ENCODE measurements at regions of chr19 and their contacts with region 1.

Region 1: DNA sequence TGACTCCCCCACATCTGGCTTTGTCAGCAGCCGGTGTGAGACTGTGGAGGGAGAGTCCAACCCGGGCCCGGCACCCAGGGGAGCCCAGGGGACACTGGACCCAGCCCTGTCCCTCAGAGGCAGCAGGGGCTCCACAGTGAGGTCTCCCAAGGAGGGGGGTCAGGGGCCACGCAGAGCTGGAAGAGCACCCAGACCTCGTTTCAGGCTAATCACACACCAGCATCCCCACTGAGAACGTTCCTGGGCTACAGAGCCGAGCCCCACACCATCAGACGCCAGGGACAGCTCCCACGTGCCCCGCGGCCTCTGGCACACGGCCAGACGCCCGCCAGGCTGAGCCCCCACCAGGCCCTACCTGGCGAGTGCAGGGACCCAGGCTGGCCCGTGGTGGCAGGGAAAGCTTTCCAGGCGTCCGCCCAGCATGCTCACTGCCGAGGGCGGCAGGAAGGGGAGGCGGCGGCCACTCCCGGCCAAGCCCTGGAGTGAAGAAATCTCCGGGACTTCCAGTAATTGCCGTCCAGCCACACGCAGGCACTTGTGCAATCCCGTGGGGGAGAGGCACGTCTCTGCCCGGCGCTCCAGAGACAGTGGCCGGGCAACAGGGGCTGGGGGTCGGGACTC is 19.2 kb downstream of the SBNO2 start:
- DNase-seq: peak; percentile 82 to 93 (median 83)
- H3K4me3 ChIP-seq: peak overlapping the region; percentile 31
- H3K27ac ChIP-seq: peak overlapping the region; percentile 80 to 86
- H3K4me1 ChIP-seq: peaks cover 22% of the 10 kb centered on the region
- H3K27me3 ChIP-seq: no peaks in the 10 kb centered on the region
- CTCF ChIP-seq: peak in 2 of 3 donors; percentile 6 to 27
- EP300 ChIP-seq: peak; percentile 99
- POLR2A ChIP-seq: peak; percentile 59

Region 2: GRCh38 chr19:2302319-2303210 is 1147.7 kb after region 1 on chr19:
- intact Hi-C with region 1: loop called in 1 of 4 experiments (anchors 10 kb)
- DNase-seq: peak in 1 of 5 donors; percentile 45
- H3K4me3 ChIP-seq: no peak overlapping the region
- H3K27ac ChIP-seq: no peak overlapping the region
- H3K4me1 ChIP-seq: no peaks in the 10 kb centered on the region
- H3K27me3 ChIP-seq: no peaks in the 10 kb centered on the region
- CTCF ChIP-seq: no peak
- EP300 ChIP-seq: no peak
- POLR2A ChIP-seq: no peak

Measured in ovary (tissue), 10 donors.